ENCODE measurements at regions of chr1 and their contacts with region 1.

Region 1: DNA sequence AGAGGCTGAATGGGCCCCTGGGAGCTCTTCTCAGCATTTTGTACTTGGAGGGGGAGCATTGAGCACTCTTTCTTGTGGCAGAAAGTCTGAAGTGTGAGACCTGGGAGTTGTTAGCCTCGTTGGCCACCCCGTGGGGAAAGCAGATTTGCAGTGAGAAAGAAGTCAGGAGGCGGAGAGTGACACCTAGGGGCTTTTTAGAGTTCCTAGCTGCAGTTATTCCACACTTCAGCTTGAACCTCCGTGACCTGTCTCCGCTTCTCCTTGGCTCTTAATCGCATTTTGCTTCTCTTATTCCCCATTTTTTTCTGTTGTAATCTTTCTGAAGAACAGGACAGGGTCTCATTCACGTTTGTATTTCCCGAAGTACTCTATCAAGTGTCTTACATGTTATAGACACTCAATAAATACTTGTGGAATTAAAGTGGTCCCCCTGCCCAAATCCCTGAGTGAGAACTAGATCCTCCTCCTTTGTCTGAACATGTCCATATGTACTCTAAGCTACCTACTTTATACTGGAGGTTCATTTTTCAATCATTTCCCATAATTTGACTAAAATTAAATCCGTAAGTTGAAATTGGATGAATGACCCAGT is 14.5 kb upstream of the C1orf141 start:
- DNase-seq: peak; percentile 31
- H3K4me3 Mint-ChIP-seq: no peak overlapping the region
- H3K27ac Mint-ChIP-seq: no peak overlapping the region
- H3K4me1 Mint-ChIP-seq: peaks cover 33% of the 10 kb centered on the region
- H3K27me3 Mint-ChIP-seq: peaks cover 25% of the 10 kb centered on the region

Region 2: DNA sequence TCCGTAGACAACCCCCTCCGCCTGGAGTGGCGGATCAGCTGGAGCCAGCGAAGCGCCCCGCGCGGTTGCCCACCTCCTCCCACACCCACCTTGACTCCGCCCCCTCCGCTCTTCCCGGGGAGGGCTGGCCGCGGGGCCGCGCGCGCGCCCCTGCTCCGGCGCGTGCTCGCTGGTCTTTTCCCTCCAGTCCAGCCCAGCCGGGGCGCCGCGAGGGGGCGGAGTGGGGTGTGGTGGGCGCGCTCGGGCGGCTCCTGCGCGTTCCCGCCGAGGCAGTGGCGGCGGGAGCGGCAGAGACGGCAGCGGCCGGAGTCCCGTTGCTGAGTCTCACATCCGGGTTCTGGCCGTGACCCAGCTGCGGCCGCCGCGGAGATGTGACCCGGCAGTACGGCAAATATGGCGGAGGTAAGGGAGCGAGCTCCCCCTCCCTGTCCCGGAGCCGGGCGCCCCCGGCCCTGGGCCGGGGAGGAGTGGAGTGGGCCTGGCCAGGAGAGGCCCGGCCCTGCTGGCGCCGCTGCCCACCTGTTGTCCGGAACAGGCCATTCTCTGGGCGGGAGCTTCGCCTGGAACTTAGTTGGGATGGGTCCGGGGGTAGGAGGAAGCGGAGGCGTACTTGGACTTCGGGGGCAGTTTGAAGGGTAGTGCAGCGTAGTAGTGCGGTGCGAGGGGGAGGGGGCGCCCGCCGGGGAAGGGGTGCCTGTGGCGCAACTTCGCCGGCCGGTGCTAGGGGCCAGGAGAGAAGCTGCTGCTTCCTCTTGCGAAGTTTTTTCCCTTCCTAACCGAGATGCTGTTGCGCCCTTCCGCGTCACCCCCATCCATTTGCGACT is 219.1 kb before region 1 on chr1:
- intact Hi-C with region 1: loop called (anchors 5 kb)
- DNase-seq: peak; percentile 93
- H3K4me3 Mint-ChIP-seq: peak overlapping the region; percentile 90
- H3K27ac Mint-ChIP-seq: peak overlapping the region; percentile 91
- H3K4me1 Mint-ChIP-seq: peaks cover 55% of the 10 kb centered on the region
- H3K27me3 Mint-ChIP-seq: no peaks in the 10 kb centered on the region

Region 3: GRCh38 chr1:66996018-66996682 is 153.1 kb before region 1 on chr1:
- intact Hi-C with region 1: loop called (anchors 2 kb)
- DNase-seq: peak; percentile 49
- H3K4me3 Mint-ChIP-seq: no peak overlapping the region
- H3K27ac Mint-ChIP-seq: no peak overlapping the region
- H3K4me1 Mint-ChIP-seq: peaks cover 15% of the 10 kb centered on the region
- H3K27me3 Mint-ChIP-seq: no peaks in the 10 kb centered on the region

Region 4: DNA sequence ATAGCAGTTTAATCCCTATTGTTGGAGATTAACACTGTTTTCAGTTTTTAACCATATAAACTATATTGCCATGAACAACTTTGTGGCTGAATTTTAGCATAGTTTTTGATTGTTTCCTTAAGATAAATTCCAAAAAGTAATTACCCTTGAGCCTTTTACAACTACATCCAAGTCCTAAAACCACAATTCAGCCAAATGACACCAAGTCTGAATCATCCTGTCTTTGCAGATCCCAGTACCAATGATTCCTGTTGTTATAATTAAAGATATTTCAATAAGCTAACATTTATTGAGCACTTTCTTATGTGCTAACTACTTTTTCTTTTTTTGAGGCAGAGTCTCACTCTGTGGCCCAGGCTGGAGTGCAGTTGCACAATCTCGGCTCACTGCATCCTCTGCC is 52.6 kb after region 1 on chr1:
- intact Hi-C with region 1: no loop called
- DNase-seq: no peak
- H3K4me3 Mint-ChIP-seq: no peak overlapping the region
- H3K27ac Mint-ChIP-seq: no peak overlapping the region
- H3K4me1 Mint-ChIP-seq: no peaks in the 10 kb centered on the region
- H3K27me3 Mint-ChIP-seq: no peaks in the 10 kb centered on the region

Region 5: GRCh38 chr1:67214420-67215174 is 65.3 kb after region 1 on chr1:
- intact Hi-C with region 1: loop called (anchors 1 kb)
- DNase-seq: no peak
- H3K4me3 Mint-ChIP-seq: no peak overlapping the region
- H3K27ac Mint-ChIP-seq: no peak overlapping the region
- H3K4me1 Mint-ChIP-seq: peaks cover 32% of the 10 kb centered on the region
- H3K27me3 Mint-ChIP-seq: no peaks in the 10 kb centered on the region

Measured in activated T-helper 2 cell treated with anti-CD3 and anti-CD28 coated beads, Interferon-gamma antibody, Interleukin-2, Interleukin-4, amounts not matched to agents 10 μg/mL and 5 μg/mL and 100 μg/mL, durations not matched to agents 14 hours and 24 hours and 36 hours (primary cell).